ENCODE measurements at regions of chr19 and their contacts with region 1.

Region 1: GRCh38 chr19:45817010-45817724 is 2.1 kb upstream of the RSPH6A start:
- DNase-seq: peak; percentile 93 to 98
- ATAC-seq: peak; percentile 99 to 100 (median 100)
- H3K4me3 ChIP-seq: no peak overlapping the region
- H3K4me3 Mint-ChIP-seq: peak overlapping the region; percentile 59
- H3K27ac ChIP-seq: no peak overlapping the region
- H3K27ac Mint-ChIP-seq: peak overlapping the region in 1 of 2 donors; percentile 29
- H3K4me1 ChIP-seq: peaks cover 27% of the 10 kb centered on the region
- H3K4me1 Mint-ChIP-seq: peaks cover 0 to 10% of the 10 kb centered on the region in 2 donors
- H3K27me3 ChIP-seq: peaks cover 6% of the 10 kb centered on the region
- H3K27me3 Mint-ChIP-seq: peaks cover 0 to 7% of the 10 kb centered on the region in 2 donors
- CTCF ChIP-seq: peak; percentile 100

Region 2: GRCh38 chr19:45889210-45889885 is 72.2 kb after region 1 on chr19:
- intact Hi-C with region 1: no loop called
- DNase-seq: no peak
- ATAC-seq: no peak
- H3K4me3 ChIP-seq: no peak overlapping the region
- H3K4me3 Mint-ChIP-seq: no peak overlapping the region
- H3K27ac ChIP-seq: no peak overlapping the region
- H3K27ac Mint-ChIP-seq: peak overlapping the region in 1 of 2 donors; percentile 51
- H3K4me1 ChIP-seq: peaks cover 19% of the 10 kb centered on the region
- H3K4me1 Mint-ChIP-seq: peaks cover 11 to 22% of the 10 kb centered on the region in 2 donors
- H3K27me3 ChIP-seq: no peaks in the 10 kb centered on the region
- H3K27me3 Mint-ChIP-seq: no peaks in the 10 kb centered on the region
- CTCF ChIP-seq: no peak

Region 3: DNA sequence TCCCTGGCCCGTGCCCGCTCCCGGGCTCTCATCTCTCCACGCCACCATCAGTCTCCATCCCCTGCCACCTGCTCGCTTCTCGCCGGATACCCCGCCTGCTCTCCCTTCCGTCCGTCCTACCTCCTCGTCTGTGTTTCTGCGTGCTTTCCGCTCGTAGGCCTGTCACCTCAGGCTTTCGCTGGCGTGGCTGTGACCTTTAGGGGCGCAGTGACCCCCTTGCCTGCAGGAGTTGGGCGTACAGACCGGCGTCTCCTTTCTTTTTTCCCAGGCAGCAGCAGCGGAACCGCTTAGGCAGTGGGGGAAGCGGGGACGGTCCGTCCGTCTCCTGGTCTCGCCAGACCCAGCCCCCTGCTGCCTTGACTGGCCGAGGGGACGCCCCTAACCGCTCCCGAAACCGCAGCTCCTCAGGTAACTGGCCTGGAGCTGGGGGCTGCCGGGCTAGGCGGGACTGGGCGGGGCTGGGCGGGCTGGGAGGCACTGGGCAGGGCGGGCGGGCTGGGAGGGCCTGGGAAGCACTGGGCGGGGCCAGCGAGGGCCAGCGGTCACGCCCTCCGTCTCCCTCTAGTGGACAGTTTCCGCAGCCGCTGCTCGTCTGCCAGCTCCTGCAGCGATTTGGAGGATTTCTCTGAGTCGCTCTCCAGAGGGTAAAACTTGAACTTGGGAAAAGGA is 199.4 kb after region 1 on chr19:
- intact Hi-C with region 1: loop called (anchors 5 kb)
- DNase-seq: peak; percentile 79 to 93
- ATAC-seq: peak; percentile 80 to 90 (median 81)
- H3K4me3 ChIP-seq: peak overlapping the region; percentile 89
- H3K4me3 Mint-ChIP-seq: peak overlapping the region; percentile 96
- H3K27ac ChIP-seq: no peak overlapping the region
- H3K27ac Mint-ChIP-seq: peak overlapping the region; percentile 61 to 74
- H3K4me1 ChIP-seq: peaks cover 24% of the 10 kb centered on the region
- H3K4me1 Mint-ChIP-seq: peaks cover 12 to 24% of the 10 kb centered on the region in 2 donors
- H3K27me3 ChIP-seq: peaks cover 5% of the 10 kb centered on the region
- H3K27me3 Mint-ChIP-seq: peaks cover 0 to 9% of the 10 kb centered on the region in 2 donors
- CTCF ChIP-seq: peak; percentile 87

Measured in natural killer cell (primary cell).